ENCODE measurements at regions of chr5 and their contacts with region 1.

Region 1: DNA sequence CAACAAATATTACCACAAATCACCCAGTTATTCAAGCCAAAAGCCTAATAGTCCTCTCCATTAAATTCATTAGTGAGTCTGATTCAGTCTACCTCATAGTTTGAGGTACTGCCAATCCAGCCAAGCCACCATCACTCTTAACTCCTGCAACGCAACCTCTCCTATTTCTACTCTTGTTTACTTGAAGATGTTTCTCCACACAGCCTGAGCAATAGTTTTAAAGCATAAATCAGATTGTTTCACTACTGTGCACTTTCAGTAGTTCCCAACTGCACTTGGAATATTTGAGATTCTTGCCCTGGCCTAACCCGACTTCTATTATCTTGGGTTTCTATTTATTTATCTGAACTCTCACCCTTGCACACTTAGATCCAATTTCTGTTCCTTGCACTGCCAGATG is 85.5 kb downstream of the YIPF5 start:
- DNase-seq: no peak
- H3K4me3 ChIP-seq: no peak overlapping the region
- H3K27ac ChIP-seq: no peak overlapping the region
- H3K4me1 ChIP-seq: peaks cover 0 to 8% (median 0%) of the 10 kb centered on the region in 4 donors
- H3K27me3 ChIP-seq: no peaks in the 10 kb centered on the region
- CTCF ChIP-seq: no peak
- EP300 ChIP-seq: no peak
- POLR2A ChIP-seq: no peak

Region 2: DNA sequence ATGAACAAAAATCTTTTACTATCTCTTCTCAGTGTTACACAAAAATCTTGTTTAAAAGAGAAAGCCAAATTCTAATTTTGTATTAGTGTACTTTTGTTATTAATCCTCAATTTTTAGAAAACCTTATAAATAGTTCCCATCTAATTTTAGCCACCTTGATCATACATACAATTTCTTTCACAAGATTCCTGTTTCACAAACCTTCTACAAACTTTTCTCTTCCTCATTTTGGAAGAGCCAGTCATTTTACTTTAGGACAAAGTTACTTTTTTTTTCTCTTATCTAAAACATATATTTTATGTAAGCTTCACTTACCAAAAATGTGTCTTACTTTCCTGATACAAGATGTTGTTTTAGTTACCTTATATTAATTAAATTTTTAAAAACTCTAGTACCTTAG is 75.9 kb before region 1 on chr5:
- in situ Hi-C with region 1: no loop called
- intact Hi-C with region 1: loop called (anchors 2 kb)
- DNase-seq: no peak
- H3K4me3 ChIP-seq: no peak overlapping the region
- H3K27ac ChIP-seq: no peak overlapping the region
- H3K4me1 ChIP-seq: no peaks in the 10 kb centered on the region
- H3K27me3 ChIP-seq: no peaks in the 10 kb centered on the region
- CTCF ChIP-seq: no peak
- EP300 ChIP-seq: no peak
- POLR2A ChIP-seq: no peak

Measured in transverse colon (tissue), 4 donors.